ENCODE measurements at regions of chr6 and their contacts with region 1.

Region 1: GRCh38 chr6:110528101-110528929 is 51.9 kb upstream of the SLC22A16 start:
- DNase-seq: no peak

Region 2: DNA sequence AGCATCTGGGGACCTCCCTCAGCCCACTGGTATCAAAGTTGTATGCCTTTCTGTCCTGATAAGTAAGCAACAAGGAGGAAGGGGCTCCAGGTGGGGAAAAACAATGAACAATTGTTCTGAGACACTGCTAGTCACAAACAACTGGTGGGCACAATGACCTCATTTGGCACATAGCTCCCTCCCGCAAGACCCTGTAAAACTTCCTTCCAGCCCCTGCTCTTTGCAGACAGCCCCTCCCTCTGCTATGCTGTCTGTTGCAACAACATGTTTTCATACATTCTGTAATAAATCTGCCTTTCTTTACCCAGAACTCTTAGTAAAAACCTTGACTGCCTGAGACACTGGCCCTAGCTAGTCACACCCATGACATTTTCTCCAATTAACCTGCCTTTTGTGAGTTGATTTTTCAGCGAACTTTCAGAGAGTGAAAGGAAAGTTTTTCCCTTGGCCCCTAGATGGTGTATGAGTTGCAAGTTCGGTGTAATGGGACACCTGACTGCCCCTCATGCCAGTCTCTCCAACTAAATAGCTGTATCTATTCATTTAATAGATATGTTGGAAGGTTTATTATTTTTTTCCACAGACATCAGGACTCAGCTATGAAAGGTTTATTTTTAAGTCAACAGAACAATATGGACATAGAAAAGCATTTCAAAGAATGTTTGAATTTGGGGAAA is 90.4 kb after region 1 on chr6:
- intact Hi-C with region 1: loop called (anchors 5 kb)
- DNase-seq: no peak

Region 3: GRCh38 chr6:110682460-110682853 is 154.1 kb after region 1 on chr6:
- intact Hi-C with region 1: loop called (anchors 5 kb)
- DNase-seq: no peak

Region 4: GRCh38 chr6:110873981-110874879 is 345.9 kb after region 1 on chr6 and contains the start of gene AMD1:
- intact Hi-C with region 1: loop called (anchors 5 kb)
- DNase-seq: peak; percentile 99
- total RNA-seq, gene AMD1: 46.0 TPM

Region 5: GRCh38 chr6:110949679-110950285 is 421.5 kb after region 1 on chr6:
- intact Hi-C with region 1: loop called (anchors 2 kb)
- DNase-seq: no peak

Region 6: DNA sequence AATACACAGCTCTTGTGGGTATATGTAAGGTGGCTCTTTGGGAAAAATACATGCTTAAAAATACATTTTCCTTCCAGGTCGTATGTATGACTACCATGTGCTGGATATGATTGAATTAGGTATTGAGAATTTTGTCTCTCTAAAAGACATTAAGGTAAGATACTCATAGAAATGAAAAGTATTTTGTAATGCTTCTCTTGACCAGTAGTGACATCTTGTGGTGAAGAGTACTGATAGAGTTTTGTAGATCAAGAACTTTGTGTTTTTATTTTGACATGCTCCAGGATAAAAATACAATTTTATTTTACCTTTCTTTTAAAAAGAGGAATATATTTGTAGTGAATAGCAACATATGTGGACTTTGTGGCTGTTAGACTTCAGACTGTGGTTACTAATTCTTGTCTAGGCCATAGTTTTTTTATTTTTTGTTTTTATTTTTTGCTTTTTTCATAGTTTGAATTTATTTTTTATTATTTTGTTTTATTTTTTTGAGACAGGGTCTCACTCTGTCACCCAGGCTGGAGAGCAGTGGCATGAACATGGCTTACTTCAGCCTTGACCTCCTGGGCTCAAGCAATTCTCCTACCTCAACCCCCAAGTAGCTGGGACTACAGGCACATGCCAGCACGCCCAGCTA is 471.4 kb after region 1 on chr6:
- intact Hi-C with region 1: loop called (anchors 5 kb)
- DNase-seq: no peak

Region 7: GRCh38 chr6:111210194-111210728 is 681.9 kb after region 1 on chr6:
- intact Hi-C with region 1: loop called (anchors 5 kb)
- DNase-seq: no peak